MCF 10A (cell line): ENCODE measurements at regions of chr20 and their contacts with region 1.

Region 1: DNA sequence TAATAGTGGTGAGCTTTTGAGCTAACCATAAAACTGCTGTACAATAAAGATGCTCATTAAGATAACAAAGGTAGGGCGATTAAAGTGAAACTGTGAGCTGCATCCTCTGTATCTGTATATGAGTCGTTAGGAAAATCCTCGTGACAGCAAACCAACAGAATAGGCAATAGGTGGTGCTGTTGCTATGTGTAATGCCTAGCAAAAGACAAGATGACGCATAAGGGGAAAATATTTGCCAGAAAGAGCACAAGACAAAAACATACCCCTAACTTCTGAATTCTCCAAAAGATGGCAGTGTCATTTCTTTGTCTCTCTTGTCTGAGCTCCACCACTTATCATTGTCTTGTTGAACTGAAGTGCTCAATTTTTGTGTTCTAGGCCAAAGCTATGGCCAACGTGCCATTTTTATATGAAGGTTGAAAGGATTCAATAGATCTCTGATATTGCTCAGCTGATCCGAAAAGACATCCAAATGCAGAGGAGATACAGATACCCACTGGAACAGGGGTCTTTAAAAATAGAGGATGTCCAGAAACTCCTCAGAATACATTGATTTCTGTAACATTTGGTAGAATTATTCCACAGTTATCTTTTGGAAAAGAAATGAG is 56.3 kb upstream of the ANKEF1 start:
- DNase-seq: peak; percentile 88
- H3K4me3 Mint-ChIP-seq: no peak overlapping the region
- H3K27ac Mint-ChIP-seq: no peak overlapping the region
- H3K4me1 Mint-ChIP-seq: peaks cover 10% of the 10 kb centered on the region
- H3K27me3 Mint-ChIP-seq: no peaks in the 10 kb centered on the region
- CTCF ChIP-seq: peak; percentile 87

Region 2: GRCh38 chr20:9616833-9617489 is 361.5 kb before region 1 on chr20:
- CTCF ChIA-PET with region 1: interaction called, 49 read pairs
- POLR2A ChIA-PET with region 1: no interaction called
- intact Hi-C with region 1: no loop called
- DNase-seq: peak; percentile 72
- H3K4me3 Mint-ChIP-seq: no peak overlapping the region
- H3K27ac Mint-ChIP-seq: no peak overlapping the region
- H3K4me1 Mint-ChIP-seq: no peaks in the 10 kb centered on the region
- H3K27me3 Mint-ChIP-seq: peaks cover 28% of the 10 kb centered on the region
- CTCF ChIP-seq: peak; percentile 93

Region 3: DNA sequence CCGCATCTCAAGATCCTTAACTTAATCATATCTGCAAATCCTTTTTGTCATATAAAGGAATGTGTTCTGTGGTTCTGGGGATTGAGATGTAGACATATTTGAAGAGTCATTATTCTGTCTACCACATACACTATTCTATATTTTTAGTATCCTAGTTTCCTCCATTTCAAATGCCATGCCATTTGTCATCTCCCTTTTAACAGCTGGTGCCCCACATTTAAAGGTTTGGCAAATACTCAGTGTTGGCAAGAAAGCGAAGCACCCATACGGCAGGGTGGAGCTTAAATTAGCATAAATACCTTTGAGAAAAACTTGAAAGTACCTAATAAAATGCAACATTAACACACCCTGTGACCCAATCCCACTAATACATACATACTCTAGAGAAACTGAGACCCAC is 171.4 kb before region 1 on chr20:
- CTCF ChIA-PET with region 1: no interaction called
- POLR2A ChIA-PET with region 1: no interaction called
- intact Hi-C with region 1: no loop called
- DNase-seq: no peak
- H3K4me3 Mint-ChIP-seq: no peak overlapping the region
- H3K27ac Mint-ChIP-seq: no peak overlapping the region
- H3K4me1 Mint-ChIP-seq: no peaks in the 10 kb centered on the region
- H3K27me3 Mint-ChIP-seq: no peaks in the 10 kb centered on the region
- CTCF ChIP-seq: no peak

Region 4: DNA sequence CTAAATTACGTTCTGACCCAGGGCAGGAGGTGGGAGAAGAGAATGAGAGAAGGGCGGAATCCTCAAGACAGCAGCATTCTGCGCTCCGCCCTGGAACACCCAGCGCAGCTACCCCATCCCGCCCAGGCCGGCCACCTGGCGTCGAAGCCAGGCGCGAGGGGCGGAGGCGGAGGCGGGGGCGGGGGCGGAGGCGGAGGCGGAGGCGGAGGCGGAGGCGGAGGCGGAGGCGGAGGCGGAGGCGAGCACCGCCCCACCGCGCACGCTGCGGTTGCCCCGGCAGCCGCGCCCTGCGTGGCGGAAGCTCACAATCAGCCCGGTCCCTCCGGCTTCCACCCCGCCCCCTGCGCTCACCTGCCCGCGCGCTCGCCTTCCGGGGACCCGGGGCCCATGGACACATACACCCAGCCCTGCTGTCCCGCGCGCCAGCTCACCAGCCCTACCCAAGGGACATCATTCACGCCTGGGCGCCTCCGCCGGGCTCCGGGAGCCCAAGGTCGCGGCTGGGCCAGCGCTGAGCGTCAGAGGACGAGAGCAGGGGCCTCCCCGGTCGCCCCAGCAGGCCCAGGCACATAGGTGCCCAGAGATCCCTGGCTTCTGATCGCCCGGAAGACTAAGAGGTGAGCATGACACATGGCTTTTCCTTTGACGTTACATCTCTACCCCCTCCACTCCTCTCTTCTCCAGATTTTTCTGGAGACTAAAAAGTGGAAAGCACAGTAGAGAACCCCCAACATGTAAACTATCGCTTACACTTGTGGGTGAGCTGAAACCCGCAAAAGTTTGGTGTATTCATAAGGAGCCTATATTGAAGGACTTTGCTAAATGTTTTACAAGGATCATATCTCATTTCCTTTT is 56.4 kb after region 1 on chr20 and contains the start of gene ANKEF1:
- CTCF ChIA-PET with region 1: interaction called, 25 read pairs
- POLR2A ChIA-PET with region 1: interaction called, 5 read pairs
- intact Hi-C with region 1: loop called (anchors 5 kb)
- DNase-seq: peak; percentile 72
- H3K4me3 Mint-ChIP-seq: peak within 1 kb of the TSS; percentile 73
- H3K27ac Mint-ChIP-seq: peak within 1 kb of the TSS; percentile 57
- H3K4me1 Mint-ChIP-seq: peaks cover 1% of the 10 kb centered on the region
- H3K27me3 Mint-ChIP-seq: no peaks in the 10 kb centered on the region
- CTCF ChIP-seq: no peak
- total RNA-seq, gene ANKEF1: 5.6 and 7.2 TPM in 2 replicates

Region 5: DNA sequence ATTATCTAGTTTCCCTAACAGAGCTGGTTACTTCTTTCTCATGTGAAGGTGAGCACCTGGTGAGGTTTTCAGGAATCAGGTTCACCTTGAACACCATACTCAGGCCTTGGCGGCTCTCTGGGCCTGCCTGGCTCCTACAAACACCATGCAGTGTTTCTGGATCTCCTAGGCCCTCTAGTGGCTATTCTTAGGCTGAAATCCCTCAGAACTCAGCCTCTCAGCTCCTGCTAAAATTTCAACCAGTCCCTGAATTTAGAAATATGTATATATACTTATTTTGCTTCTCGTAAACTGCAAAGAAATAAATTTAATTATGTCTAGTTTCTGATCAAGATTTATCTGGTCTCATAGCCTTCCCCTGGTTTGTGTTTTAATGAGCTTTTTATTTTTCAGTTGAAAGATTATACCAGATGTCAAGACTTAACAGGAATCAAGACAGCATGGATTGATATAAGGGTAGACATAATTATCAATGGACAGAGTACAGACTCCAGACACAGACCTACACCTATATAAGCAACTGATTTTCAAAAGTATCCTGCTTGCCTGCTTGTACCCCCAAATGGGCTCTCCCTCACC is 112.2 kb after region 1 on chr20:
- CTCF ChIA-PET with region 1: interaction called, 826 read pairs
- POLR2A ChIA-PET with region 1: interaction called, 64 read pairs
- intact Hi-C with region 1: loop called (anchors 1 kb)
- DNase-seq: peak; percentile 69
- H3K4me3 Mint-ChIP-seq: no peak overlapping the region
- H3K27ac Mint-ChIP-seq: no peak overlapping the region
- H3K4me1 Mint-ChIP-seq: peaks cover 11% of the 10 kb centered on the region
- H3K27me3 Mint-ChIP-seq: no peaks in the 10 kb centered on the region
- CTCF ChIP-seq: peak; percentile 57

Region 6: DNA sequence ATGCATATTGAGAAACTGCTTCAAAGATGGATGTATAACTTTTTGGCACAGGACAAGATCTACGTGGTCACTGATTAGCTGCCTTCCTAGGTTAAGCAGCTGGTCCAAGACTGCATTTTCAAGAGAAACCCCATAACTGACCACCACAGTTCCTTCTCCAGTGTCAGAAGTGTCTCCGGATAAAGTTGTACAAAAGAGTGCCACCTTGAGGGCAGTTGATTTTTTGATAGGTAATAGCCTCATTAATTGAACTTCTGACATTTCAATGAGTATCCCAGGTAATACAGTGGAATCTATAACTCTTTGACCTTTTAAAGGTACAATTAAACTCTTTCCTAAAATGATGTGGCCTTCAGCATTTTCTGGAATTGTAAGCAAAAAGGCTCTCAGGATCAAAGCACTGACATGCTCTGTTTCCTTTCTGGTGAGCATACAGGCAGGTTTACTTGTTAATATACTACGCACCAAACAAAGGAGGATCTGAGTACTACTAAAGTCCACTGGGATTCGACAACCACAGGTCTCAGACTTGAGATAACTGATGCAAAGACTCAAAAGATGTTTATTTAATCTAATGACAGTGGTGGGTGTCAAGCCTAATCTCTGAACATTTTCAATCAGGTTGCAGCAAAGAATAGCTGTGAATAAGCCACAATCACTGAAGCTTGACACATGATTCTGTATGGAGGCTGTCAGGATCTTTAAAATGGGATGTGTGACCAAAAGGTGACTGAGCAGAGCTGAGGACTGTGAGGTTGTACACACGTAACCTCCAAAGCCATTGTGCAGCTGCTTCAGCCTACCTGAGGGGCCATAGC is 434.3 kb after region 1 on chr20:
- CTCF ChIA-PET with region 1: interaction called, 71 read pairs
- POLR2A ChIA-PET with region 1: no interaction called
- intact Hi-C with region 1: no loop called
- DNase-seq: no peak
- H3K4me3 Mint-ChIP-seq: no peak overlapping the region
- H3K27ac Mint-ChIP-seq: no peak overlapping the region
- H3K4me1 Mint-ChIP-seq: peaks cover 28% of the 10 kb centered on the region
- H3K27me3 Mint-ChIP-seq: no peaks in the 10 kb centered on the region
- CTCF ChIP-seq: no peak

Region 7: DNA sequence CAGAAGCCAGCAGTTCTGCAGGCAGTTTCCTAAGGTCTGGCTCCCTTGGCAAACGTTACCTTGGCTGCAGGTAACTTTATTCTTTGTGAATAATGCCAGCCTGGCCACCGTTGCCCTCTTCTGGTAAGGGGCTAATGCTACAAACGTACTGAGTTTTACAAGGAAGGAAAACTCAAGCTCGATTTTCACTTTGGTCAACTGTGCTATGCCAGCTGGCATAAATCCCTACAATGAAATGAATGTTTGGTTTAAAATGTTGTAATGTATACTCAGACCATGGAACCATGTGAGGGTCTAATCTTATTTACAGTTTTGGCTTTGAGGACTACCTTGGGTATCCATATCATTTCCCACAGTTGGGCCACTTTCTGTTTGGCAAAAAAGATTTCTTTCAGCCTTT is 558.0 kb after region 1 on chr20:
- CTCF ChIA-PET with region 1: interaction called, 8 read pairs
- POLR2A ChIA-PET with region 1: interaction called, 4 read pairs
- intact Hi-C with region 1: loop called (anchors 1 kb)
- DNase-seq: peak; percentile 71
- H3K4me3 Mint-ChIP-seq: no peak overlapping the region
- H3K27ac Mint-ChIP-seq: no peak overlapping the region
- H3K4me1 Mint-ChIP-seq: peaks cover 31% of the 10 kb centered on the region
- H3K27me3 Mint-ChIP-seq: no peaks in the 10 kb centered on the region
- CTCF ChIP-seq: peak; percentile 44